ENCODE measurements at regions of chr3 and their contacts with region 1.

Region 1: GRCh38 chr3:9352917-9353752 is 9.7 kb upstream of the THUMPD3 start:
- DNase-seq: peak; percentile 9 to 77 (median 51)
- ATAC-seq: peak in 3 of 4 experiments; percentile 61 to 72 (median 62)
- H3K4me3 ChIP-seq: no peak overlapping the region
- H3K4me3 Mint-ChIP-seq: no peak overlapping the region
- H3K27ac ChIP-seq: no peak overlapping the region
- H3K27ac Mint-ChIP-seq: no peak overlapping the region
- H3K4me1 ChIP-seq: no peaks in the 10 kb centered on the region
- H3K4me1 Mint-ChIP-seq: peaks cover 6 to 18% (median 15%) of the 10 kb centered on the region in 3 donors
- H3K27me3 ChIP-seq: no peaks in the 10 kb centered on the region
- H3K27me3 Mint-ChIP-seq: no peaks in the 10 kb centered on the region

Region 2: GRCh38 chr3:9373465-9373864 is 20.3 kb after region 1 on chr3:
- CTCF ChIA-PET with region 1: interaction called in 1 of 2 experiments, 10 read pairs
- POLR2A ChIA-PET with region 1: interaction called in 1 of 2 experiments, 4 read pairs
- DNase-seq: no peak
- ATAC-seq: no peak
- H3K4me3 ChIP-seq: peak overlapping the region in 1 of 2 donors; percentile 19
- H3K4me3 Mint-ChIP-seq: peak overlapping the region in 1 of 3 donors; percentile 8
- H3K27ac ChIP-seq: no peak overlapping the region
- H3K27ac Mint-ChIP-seq: peak overlapping the region in 1 of 2 donors; percentile 53
- H3K4me1 ChIP-seq: peaks cover 0 to 9% of the 10 kb centered on the region in 2 experiments
- H3K4me1 Mint-ChIP-seq: peaks cover 30 to 54% (median 44%) of the 10 kb centered on the region in 3 donors
- H3K27me3 ChIP-seq: no peaks in the 10 kb centered on the region
- H3K27me3 Mint-ChIP-seq: no peaks in the 10 kb centered on the region

Region 3: DNA sequence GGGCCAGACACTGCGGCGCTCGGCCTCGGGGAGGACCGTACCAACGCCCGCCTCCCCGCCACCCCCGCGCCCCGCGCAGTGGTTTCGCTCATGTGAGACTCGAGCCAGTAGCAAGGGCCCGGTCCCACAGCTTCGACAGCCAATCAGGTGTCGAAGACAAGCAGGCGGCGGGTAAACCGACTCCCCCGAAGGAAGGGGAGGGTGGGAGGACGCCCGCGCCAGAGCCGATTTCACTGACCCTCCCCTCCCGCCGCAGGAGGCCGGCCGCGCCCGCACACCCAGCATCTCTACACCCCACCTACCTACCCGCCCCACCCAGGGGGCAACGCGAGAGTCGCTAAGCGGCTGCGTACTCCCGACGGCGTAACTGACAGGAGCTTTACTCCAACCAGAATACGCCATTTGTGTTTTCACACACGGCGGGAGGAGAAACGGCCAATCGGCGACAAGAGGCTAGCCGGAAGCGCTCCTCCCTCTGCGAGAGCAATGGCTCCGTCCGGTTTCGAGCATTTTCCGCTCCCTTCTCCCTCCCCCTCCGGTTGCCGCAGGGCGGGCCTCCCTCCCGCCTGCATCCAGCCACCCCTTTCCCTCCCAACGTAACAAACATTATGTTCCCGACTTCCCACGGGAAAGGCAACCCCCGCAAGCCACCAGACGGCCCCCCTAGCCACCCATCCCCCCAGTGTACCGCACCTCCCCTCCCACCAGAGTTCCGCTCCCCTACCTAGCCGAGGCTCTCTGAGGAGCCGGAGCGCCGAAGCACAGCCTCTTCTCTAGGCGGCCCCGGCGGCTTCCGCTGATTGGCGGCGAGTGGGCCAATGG is 43.8 kb after region 1 on chr3:
- CTCF ChIA-PET with region 1: interaction called, 3 to 14 read pairs
- POLR2A ChIA-PET with region 1: interaction called in 1 of 2 experiments, 3 read pairs
- DNase-seq: peak; percentile 97 to 100 (median 99)
- ATAC-seq: peak; percentile 70 to 75 (median 71)
- H3K4me3 ChIP-seq: peak overlapping the region; percentile 80
- H3K4me3 Mint-ChIP-seq: peak overlapping the region; percentile 93 to 100 (median 95)
- H3K27ac ChIP-seq: peak overlapping the region; percentile 95
- H3K27ac Mint-ChIP-seq: peak overlapping the region; percentile 97 to 98
- H3K4me1 ChIP-seq: peaks cover 48 to 53% of the 10 kb centered on the region in 2 experiments
- H3K4me1 Mint-ChIP-seq: peaks cover 73 to 79% (median 75%) of the 10 kb centered on the region in 3 donors
- H3K27me3 ChIP-seq: no peaks in the 10 kb centered on the region
- H3K27me3 Mint-ChIP-seq: no peaks in the 10 kb centered on the region

Region 4: GRCh38 chr3:9422712-9423424 is 69.7 kb after region 1 on chr3:
- CTCF ChIA-PET with region 1: interaction called, 9 to 12 read pairs
- POLR2A ChIA-PET with region 1: interaction called in 1 of 2 experiments, 10 read pairs
- DNase-seq: peak in 1 of 35 experiments; percentile 64
- ATAC-seq: peak in 3 of 4 experiments; percentile 46 to 85 (median 52)
- H3K4me3 ChIP-seq: no peak overlapping the region
- H3K4me3 Mint-ChIP-seq: no peak overlapping the region
- H3K27ac ChIP-seq: no peak overlapping the region
- H3K27ac Mint-ChIP-seq: peak overlapping the region; percentile 67 to 77
- H3K4me1 ChIP-seq: peaks cover 0 to 2% of the 10 kb centered on the region in 2 experiments
- H3K4me1 Mint-ChIP-seq: peaks cover 43 to 51% (median 49%) of the 10 kb centered on the region in 3 donors
- H3K27me3 ChIP-seq: no peaks in the 10 kb centered on the region
- H3K27me3 Mint-ChIP-seq: no peaks in the 10 kb centered on the region

Measured in T-cell (primary cell).